HCT116 (cell line): ENCODE measurements at regions of chr19 and their contacts with region 1.

Region 1: DNA sequence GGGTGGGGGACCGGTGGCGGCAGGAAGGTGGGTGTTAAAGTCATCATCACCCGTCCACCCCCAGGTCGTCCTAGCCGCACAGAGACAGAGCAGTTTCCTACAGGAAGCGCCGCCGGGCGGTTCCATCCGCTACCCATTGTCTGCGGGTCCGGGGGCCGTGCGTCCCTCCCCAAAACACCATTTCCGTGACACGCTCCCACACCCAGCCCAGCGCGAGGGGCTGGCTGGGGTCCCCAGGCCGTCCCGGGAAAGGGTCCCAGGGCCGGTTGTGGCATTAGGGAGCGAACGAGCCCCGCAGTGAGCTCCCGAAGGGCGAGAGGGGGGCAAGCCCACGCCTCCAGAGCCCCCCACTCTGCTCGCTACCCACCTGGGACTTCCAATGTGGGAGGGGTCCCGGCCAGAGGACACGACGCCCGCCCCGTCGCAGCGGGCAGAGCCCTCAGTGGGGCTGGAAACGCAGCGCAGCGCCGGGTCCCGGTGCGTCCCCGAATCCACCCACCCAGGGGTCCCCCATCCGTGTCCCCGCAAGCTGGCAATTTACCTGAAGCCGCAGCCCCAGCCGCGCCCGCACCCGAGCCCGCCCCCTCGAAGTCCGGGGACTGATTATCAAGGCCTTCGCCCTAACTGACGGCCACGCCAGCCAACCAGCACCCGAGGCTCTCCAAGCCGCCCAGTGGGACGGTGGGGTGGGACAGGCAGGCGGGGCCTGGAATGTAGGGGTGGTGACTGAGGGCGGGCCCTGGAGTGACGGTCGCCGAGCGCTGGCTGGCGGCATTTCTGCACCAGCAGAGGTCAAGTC is at the start of gene KANK3:
- DNase-seq: peak; percentile 97
- ATAC-seq: peak; percentile 100
- H3K4me3 ChIP-seq: peak within 1 kb of the TSS; percentile 59 to 63
- H3K27ac ChIP-seq: peak within 1 kb of the TSS; percentile 68; the same call in 1 of the 2 replicates
- H3K4me1 ChIP-seq: peaks cover 15 to 20% of the 10 kb centered on the region in 2 experiments
- H3K27me3 ChIP-seq: no peaks in the 10 kb centered on the region
- CTCF ChIP-seq: no peak
- POLR2A ChIP-seq: no peak
- RAD21 ChIP-seq: no peak
- total RNA-seq, gene KANK3: 21.7 TPM

Region 2: DNA sequence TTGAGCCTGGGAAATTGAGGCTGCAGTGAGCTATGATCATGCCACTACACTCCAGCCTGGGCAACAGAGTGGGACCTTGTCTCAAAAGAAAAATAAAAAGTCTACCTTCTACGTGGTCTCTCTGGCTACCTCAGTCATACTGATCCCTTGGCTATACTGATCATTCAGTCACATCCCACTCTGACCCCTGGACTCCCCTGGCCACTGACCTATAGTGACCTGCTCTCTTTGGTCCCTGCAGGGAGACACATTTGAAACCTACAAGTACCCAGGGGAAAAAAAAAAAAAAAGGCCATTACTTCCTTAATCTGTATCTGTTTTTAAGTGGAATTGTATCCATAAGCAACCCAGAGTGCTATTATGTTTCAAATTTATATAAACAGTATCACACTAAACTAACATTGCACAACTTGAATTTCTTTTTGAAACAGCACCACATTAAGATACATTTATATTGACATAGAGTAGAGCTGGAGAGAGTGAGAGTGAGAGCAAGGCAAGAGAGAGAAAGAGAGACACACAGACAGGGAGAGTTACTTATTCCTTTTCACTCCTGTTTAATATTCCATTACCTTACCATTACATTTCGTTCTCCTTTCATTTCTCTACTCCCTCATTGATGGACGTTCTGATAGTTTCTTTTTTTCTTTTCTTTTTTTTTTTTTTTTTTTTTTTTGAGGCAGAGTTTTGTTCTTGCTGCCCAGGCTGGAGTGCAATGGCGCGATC is 157.4 kb before region 1 on chr19:
- CTCF ChIA-PET with region 1: no interaction called
- POLR2A ChIA-PET with region 1: no interaction called
- RAD21 ChIA-PET with region 1: no interaction called
- intact Hi-C with region 1: no loop called
- DNase-seq: no peak
- ATAC-seq: no peak
- H3K4me3 ChIP-seq: no peak overlapping the region
- H3K27ac ChIP-seq: no peak overlapping the region
- H3K4me1 ChIP-seq: peaks cover 6 to 12% of the 10 kb centered on the region in 2 experiments
- H3K27me3 ChIP-seq: no peaks in the 10 kb centered on the region
- CTCF ChIP-seq: no peak
- POLR2A ChIP-seq: no peak
- RAD21 ChIP-seq: no peak

Region 3: GRCh38 chr19:8396563-8397203 is 53.8 kb after region 1 on chr19:
- CTCF ChIA-PET with region 1: no interaction called
- POLR2A ChIA-PET with region 1: no interaction called
- RAD21 ChIA-PET with region 1: no interaction called
- intact Hi-C with region 1: loop called (anchors 2 kb)
- DNase-seq: no peak
- ATAC-seq: peak; percentile 97
- H3K4me3 ChIP-seq: no peak overlapping the region
- H3K27ac ChIP-seq: peak overlapping the region; percentile 29; the same call in 1 of the 2 replicates
- H3K4me1 ChIP-seq: peaks cover 3 to 15% of the 10 kb centered on the region in 2 experiments; a peak in 2 of 4 replicates
- H3K27me3 ChIP-seq: no peaks in the 10 kb centered on the region
- CTCF ChIP-seq: peak in 2 of 3 experiments; percentile 75 to 86; a peak in 5 of 6 replicates
- POLR2A ChIP-seq: no peak
- RAD21 ChIP-seq: no peak; the same call in none of the 2 replicates